ENCODE measurements at regions of chr19 and their contacts with region 1.

Region 1: DNA sequence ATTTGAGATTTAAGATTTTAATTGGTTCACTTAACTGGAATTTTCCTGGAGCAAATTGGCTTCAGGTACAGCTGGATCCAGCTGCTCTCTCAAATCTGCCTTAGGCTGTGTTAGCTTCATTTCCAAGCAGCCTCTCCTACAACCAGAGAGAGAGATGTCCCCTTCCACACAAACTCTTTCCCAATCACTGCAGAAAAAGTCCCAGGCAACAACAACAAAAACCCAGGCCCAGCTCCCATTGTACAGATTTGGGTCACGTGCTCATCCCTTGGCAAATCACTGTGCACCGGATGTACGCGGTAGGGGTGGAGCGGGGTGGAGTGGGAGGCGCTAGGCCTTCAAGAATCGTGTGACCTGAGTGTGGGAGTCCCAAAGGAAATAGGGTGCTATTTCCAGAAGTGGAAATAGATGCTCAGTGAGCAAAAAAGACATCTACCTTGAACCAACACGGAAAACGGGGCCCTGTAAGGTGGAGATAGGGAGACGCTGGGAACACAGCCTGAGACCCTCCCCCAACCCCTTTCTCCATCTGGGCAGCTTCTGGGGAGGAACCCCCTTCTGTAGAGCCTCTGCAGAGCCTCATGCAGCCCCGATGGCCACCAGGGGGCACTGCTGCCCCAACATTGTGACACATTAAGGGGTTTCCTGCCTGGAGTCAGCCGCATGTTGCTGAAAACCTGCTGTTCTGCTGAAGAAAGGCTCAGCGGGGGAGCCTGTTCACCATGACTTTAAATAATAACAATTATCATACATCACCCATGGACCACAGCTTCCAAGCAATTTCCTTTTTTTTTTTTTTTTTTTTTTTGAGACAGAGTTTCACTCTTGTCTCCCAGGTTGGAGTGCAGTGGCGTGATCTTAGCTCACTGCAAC is 25.4 kb downstream of the HPN start:
- DNase-seq: peak; percentile 93
- CTCF ChIP-seq: peak; percentile 93

Region 2: GRCh38 chr19:35055715-35056179 is 11.2 kb before region 1 on chr19:
- CTCF ChIA-PET with region 1: interaction called, 13 read pairs
- POLR2A ChIA-PET with region 1: no interaction called
- DNase-seq: no peak
- CTCF ChIP-seq: peak; percentile 48

Region 3: GRCh38 chr19:35090506-35091237 is 23.7 kb after region 1 on chr19:
- CTCF ChIA-PET with region 1: interaction called, 38 read pairs
- POLR2A ChIA-PET with region 1: no interaction called
- DNase-seq: peak; percentile 76
- CTCF ChIP-seq: peak; percentile 49

Region 4: DNA sequence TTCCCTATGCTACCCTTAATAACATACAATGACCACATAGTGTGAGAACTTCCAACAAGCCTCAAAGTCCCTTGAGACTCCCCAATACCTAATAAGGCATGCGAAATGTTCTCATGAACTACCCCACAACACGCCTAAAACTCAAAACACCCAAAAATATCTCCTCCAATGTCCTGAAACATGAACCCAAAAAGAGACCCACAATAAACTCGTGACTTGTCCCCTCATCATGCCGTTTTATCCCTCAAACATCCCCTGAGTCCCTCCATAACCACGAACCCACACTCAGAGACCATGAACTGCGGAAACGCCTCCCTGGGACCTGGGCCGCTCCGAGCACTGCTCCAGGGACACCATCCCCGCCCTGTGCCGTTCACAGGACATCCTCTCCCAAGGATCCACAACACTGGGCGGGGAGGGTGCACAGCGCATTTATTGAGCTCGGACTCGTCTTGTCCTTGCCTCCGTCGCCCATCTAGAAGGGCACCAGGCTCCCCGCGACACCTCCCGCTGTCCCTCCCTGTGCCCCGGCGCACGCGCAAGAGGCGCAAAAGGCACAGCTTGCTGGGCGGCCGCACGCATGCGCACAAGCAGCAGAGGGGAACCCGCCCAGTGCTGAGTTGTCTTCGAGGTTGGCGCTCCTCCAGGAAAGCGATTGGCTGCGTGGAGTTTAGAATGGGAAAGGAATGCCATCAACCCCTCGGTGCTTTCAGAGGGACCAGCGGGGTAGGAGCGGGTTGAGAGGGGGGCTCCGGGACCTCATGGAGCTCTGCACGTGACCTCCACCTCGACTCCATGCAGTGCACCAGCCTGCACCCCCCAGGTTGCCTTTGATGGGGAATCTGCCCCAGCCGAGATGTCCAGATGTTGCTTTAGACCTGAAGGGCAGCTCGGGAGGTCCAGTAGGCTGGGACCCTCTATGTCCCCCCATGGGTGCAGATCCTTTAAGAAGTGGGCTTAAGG is 57.5 kb after region 1 on chr19:
- CTCF ChIA-PET with region 1: interaction called, 10 read pairs
- POLR2A ChIA-PET with region 1: interaction called, 5 read pairs
- DNase-seq: peak; percentile 93
- CTCF ChIP-seq: no peak

Region 5: GRCh38 chr19:35140962-35141637 is 74.2 kb after region 1 on chr19:
- CTCF ChIA-PET with region 1: interaction called, 65 read pairs
- POLR2A ChIA-PET with region 1: no interaction called
- DNase-seq: peak; percentile 100
- CTCF ChIP-seq: peak; percentile 60